Endothelial cell of umbilical vein (primary cell): ENCODE measurements at regions of chr10 and their contacts with region 1.

Region 1: GRCh38 chr10:129096065-129096984 is 370.7 kb upstream of the MGMT start:
- DNase-seq: peak; percentile 80
- H3K4me3 ChIP-seq: no peak overlapping the region
- H3K27ac ChIP-seq: no peak overlapping the region
- H3K4me1 ChIP-seq: peaks cover 7% of the 10 kb centered on the region
- H3K27me3 ChIP-seq: peaks cover 0 to 2% of the 10 kb centered on the region in 2 experiments
- CTCF ChIP-seq: no peak
- POLR2A ChIP-seq: no peak

Region 2: GRCh38 chr10:128896116-128896795 is 200.1 kb before region 1 on chr10:
- CTCF ChIA-PET with region 1: no interaction called
- POLR2A ChIA-PET with region 1: no interaction called
- dilution Hi-C with region 1: no loop called
- intact Hi-C with region 1: no loop called
- DNase-seq: no peak
- H3K4me3 ChIP-seq: no peak overlapping the region
- H3K27ac ChIP-seq: no peak overlapping the region
- H3K4me1 ChIP-seq: no peaks in the 10 kb centered on the region
- H3K27me3 ChIP-seq: no peaks in the 10 kb centered on the region
- CTCF ChIP-seq: no peak
- POLR2A ChIP-seq: no peak

Region 3: DNA sequence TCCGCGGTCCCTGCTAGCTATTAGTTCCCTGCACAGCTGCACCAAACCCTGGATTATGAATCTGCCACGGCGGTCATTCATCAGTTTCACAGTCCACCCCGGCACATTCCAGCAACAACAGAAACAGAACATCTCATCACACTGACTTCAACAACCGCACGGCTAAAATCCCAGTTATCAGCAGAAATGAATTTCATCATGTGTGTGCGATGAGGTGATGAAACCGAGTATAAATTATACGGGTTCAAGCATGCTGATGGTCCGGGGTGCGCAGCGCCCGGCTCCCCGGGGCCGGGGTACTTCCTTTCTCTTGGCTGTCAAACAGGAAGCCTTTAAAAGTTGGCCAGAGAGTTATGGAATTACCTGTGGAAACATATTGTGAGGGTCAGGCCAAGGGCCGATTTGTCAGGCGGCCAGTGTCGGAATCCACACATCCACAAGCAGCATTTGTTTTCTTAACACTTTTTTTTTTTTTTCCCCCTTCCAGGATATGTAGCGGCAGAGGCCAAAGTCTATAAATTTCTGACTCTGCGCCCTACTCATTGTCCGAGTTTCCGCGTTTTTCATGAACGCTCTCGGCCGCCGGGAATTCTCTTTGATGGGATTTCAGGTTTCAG is 50.2 kb before region 1 on chr10:
- CTCF ChIA-PET with region 1: no interaction called
- POLR2A ChIA-PET with region 1: no interaction called
- dilution Hi-C with region 1: no loop called
- intact Hi-C with region 1: loop called (anchors 2 kb)
- DNase-seq: peak; percentile 92
- H3K4me3 ChIP-seq: peak overlapping the region in 2 of 3 experiments; percentile 27 to 71
- H3K27ac ChIP-seq: peak overlapping the region; percentile 100
- H3K4me1 ChIP-seq: peaks cover 61% of the 10 kb centered on the region
- H3K27me3 ChIP-seq: no peaks in the 10 kb centered on the region
- CTCF ChIP-seq: no peak
- POLR2A ChIP-seq: no peak